PC-3 (cell line): ENCODE measurements at regions of chr12 and their contacts with region 1.

Region 1: GRCh38 chr12:60266381-60266852 is 670.6 kb downstream of the SLC16A7 start:
- DNase-seq: peak; percentile 91
- ATAC-seq: peak; percentile 99
- H3K4me3 ChIP-seq: peak overlapping the region; percentile 22; the same call in 1 of the 2 replicates
- H3K27ac ChIP-seq: peak overlapping the region; percentile 84
- H3K4me1 ChIP-seq: peaks cover 48% of the 10 kb centered on the region
- H3K27me3 ChIP-seq: no peaks in the 10 kb centered on the region
- CTCF ChIP-seq: no peak

Region 2: DNA sequence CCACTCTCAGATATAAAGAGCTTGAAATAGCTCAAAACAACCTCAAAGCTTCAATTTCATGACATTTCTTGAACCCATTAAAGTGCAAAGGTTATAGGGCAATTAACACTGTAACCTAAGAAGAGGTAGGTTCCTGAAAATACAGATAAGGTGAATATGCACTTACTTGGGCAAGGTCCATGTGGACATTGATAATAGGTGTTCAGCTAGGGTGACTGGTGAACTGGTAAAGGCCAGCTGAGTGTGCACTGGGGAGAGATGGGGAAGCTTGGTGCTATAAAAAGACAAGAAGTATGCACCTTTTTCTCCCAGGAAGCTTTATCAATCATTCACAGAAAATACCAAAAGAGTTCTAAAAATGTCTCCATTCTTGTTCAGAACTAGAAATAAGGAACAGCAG is 252.0 kb before region 1 on chr12:
- CTCF ChIA-PET with region 1: no interaction called
- POLR2A ChIA-PET with region 1: no interaction called
- intact Hi-C with region 1: no loop called
- DNase-seq: no peak
- ATAC-seq: no peak
- H3K4me3 ChIP-seq: no peak overlapping the region
- H3K27ac ChIP-seq: no peak overlapping the region
- H3K4me1 ChIP-seq: no peaks in the 10 kb centered on the region
- H3K27me3 ChIP-seq: no peaks in the 10 kb centered on the region
- CTCF ChIP-seq: no peak

Region 3: GRCh38 chr12:60308366-60308991 is 42.1 kb after region 1 on chr12:
- CTCF ChIA-PET with region 1: interaction called, 3 read pairs
- POLR2A ChIA-PET with region 1: interaction called, 6 read pairs
- intact Hi-C with region 1: loop called (anchors 2 kb)
- DNase-seq: peak; percentile 91
- ATAC-seq: peak; percentile 96
- H3K4me3 ChIP-seq: no peak overlapping the region
- H3K27ac ChIP-seq: peak overlapping the region; percentile 77
- H3K4me1 ChIP-seq: peaks cover 30% of the 10 kb centered on the region
- H3K27me3 ChIP-seq: no peaks in the 10 kb centered on the region
- CTCF ChIP-seq: no peak